Panc1 (cell line): ENCODE measurements at regions of chr2 and their contacts with region 1.

Region 1: GRCh38 chr2:69375494-69376353 is 11.3 kb downstream of the GFPT1 start:
- DNase-seq: no peak
- ATAC-seq: peak; percentile 70
- H3K4me3 ChIP-seq: no peak overlapping the region
- H3K27ac ChIP-seq: no peak overlapping the region
- H3K4me1 ChIP-seq: no peaks in the 10 kb centered on the region
- H3K27me3 ChIP-seq: no peaks in the 10 kb centered on the region
- CTCF ChIP-seq: peak; percentile 73; the same call in 1 of the 2 replicates

Region 2: GRCh38 chr2:69322631-69323030 is 53.1 kb before region 1 on chr2:
- CTCF ChIA-PET with region 1: interaction called, 12 read pairs
- POLR2A ChIA-PET with region 1: no interaction called
- in situ Hi-C with region 1: no loop called
- intact Hi-C with region 1: no loop called
- DNase-seq: no peak
- ATAC-seq: no peak
- H3K4me3 ChIP-seq: no peak overlapping the region
- H3K27ac ChIP-seq: no peak overlapping the region
- H3K4me1 ChIP-seq: no peaks in the 10 kb centered on the region
- H3K27me3 ChIP-seq: no peaks in the 10 kb centered on the region
- CTCF ChIP-seq: no peak